Right ventricle myocardium inferior (tissue), 1 donor: ENCODE measurements at regions of chr3 and their contacts with region 1.

Region 1: GRCh38 chr3:51974963-51975851 is at the start of gene ABHD14A:
- DNase-seq: peak; percentile 89
- ATAC-seq: peak; percentile 82
- total RNA-seq, gene ABHD14A: 31.5 TPM

Region 2: DNA sequence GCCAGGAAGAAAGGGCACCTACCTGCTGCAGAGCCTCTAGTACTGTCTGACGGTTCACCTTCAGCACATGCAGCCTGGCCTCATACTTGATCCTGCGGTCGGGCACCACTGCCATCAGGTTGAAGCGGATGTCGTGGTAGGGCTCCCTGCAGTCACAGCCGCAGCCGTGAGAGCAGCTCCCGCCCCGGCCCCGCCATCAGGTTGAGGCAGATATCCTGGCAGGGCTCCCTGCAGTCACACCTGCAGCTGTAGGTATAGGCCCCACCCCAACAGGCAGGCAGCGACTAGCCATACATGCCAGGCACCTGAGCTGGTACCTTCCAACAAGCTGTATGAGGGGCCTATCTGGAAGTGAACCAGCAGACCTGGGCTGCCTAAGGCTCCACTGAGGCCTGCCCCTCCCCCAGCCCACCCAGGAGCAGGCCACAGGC is 431.0 kb after region 1 on chr3:
- intact Hi-C with region 1: loop called (anchors 10 kb)
- DNase-seq: peak; percentile 56
- ATAC-seq: no peak